Colonic mucosa (tissue), 4 donors: ENCODE measurements at regions of chr18 and their contacts with region 1.

Region 1: DNA sequence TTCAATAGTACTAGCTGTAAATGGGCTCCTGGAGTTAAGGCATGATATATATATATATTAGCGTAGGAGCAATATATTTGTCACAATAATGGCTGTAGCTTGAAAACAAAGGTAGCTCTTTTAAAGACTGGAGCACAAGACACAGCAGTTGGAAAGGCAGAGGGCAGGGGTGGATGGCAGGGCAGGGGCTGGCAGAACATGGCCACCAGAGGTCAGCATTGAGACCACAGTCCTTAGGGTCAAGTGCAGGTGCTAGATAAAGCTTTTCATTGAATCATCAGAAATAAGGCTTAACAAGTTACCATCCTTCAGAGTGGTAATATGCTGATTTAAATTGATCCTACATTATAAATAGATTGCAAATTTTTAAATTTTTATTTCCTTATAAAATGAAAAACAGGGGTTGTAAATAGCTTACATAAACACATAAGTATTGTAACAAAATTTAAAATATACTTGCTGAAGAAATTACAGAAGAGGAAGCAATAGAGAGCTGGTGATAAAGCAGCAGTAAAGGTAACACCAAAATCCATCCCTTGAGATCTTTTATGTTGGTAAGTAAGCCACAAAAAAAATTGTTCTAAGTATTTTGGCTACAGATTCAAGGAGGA is 161.2 kb upstream of the PIEZO2 start:
- DNase-seq: peak; percentile 31
- H3K4me3 ChIP-seq: no peak overlapping the region
- H3K27ac ChIP-seq: no peak overlapping the region
- H3K4me1 ChIP-seq: no peaks in the 10 kb centered on the region
- H3K27me3 ChIP-seq: no peaks in the 10 kb centered on the region
- CTCF ChIP-seq: no peak

Region 2: GRCh38 chr18:11119962-11120361 is 190.6 kb before region 1 on chr18:
- intact Hi-C with region 1: no loop called
- DNase-seq: no peak
- H3K4me3 ChIP-seq: no peak overlapping the region
- H3K27ac ChIP-seq: no peak overlapping the region
- H3K4me1 ChIP-seq: no peaks in the 10 kb centered on the region
- H3K27me3 ChIP-seq: no peaks in the 10 kb centered on the region
- CTCF ChIP-seq: no peak

Region 3: GRCh38 chr18:11259469-11260150 is 51.0 kb before region 1 on chr18:
- intact Hi-C with region 1: loop called (anchors 10 kb)
- DNase-seq: peak; percentile 26
- H3K4me3 ChIP-seq: no peak overlapping the region
- H3K27ac ChIP-seq: no peak overlapping the region
- H3K4me1 ChIP-seq: no peaks in the 10 kb centered on the region
- H3K27me3 ChIP-seq: no peaks in the 10 kb centered on the region
- CTCF ChIP-seq: no peak

Region 4: GRCh38 chr18:11741505-11742145 is 431.0 kb after region 1 on chr18:
- intact Hi-C with region 1: no loop called
- DNase-seq: no peak
- H3K4me3 ChIP-seq: no peak overlapping the region
- H3K27ac ChIP-seq: no peak overlapping the region
- H3K4me1 ChIP-seq: no peaks in the 10 kb centered on the region
- H3K27me3 ChIP-seq: no peaks in the 10 kb centered on the region
- CTCF ChIP-seq: peak; percentile 48